ENCODE measurements at regions of chr17 and their contacts with region 1.

Region 1: DNA sequence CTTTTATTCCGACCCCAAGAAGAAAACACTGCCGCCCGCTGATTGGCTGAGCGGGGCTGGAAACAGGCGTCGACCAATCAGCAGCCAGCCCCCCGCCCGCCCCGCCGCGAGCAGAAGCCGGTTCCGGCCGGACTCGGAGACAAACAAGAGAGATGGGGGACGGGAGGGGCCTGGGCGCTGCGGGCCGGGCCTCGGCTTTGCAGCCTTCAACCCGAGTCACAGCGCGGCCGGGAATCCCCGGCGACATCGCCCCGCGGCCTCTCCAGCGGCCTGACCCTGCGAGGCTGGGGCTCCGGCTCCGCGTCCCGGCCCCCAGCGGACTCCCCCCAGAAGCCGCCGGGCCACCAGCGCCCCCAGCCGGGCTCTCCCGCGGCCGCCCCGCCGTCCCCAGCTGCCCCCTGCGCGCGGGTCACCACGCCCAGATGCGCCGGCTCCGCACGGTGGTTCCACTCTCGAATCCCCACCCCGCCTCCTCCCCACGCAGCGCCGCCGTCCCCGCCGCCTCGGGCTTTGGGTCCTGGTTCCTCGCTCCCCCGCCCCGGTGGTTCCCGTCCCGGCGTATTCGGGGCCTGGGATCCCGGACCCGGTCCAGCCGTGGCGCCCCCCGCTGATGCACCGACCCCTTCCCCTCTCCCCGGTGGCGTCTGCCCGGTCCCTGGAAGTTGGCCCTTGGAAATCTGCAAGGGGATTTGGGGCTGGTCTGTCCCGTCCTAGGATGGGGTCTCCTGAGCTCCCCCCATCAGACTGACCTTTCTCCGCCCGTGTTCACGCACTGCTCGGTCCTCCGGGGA is 417 bp upstream of the SLC43A2 start:
- DNase-seq: peak; percentile 96
- CTCF ChIP-seq: peak; percentile 19

Region 2: GRCh38 chr17:1573916-1574696 is 54.9 kb before region 1 on chr17:
- CTCF ChIA-PET with region 1: interaction called, 109 read pairs
- POLR2A ChIA-PET with region 1: interaction called, 7 read pairs
- DNase-seq: peak; percentile 93
- CTCF ChIP-seq: peak; percentile 84

Region 3: GRCh38 chr17:1606352-1607033 is 22.6 kb before region 1 on chr17:
- CTCF ChIA-PET with region 1: interaction called, 22 read pairs
- POLR2A ChIA-PET with region 1: interaction called, 9 read pairs
- DNase-seq: peak; percentile 30
- CTCF ChIP-seq: no peak

Region 4: GRCh38 chr17:1639549-1640343 is 10.7 kb after region 1 on chr17:
- CTCF ChIA-PET with region 1: interaction called, 59 read pairs
- POLR2A ChIA-PET with region 1: interaction called, 5 read pairs
- DNase-seq: no peak
- CTCF ChIP-seq: no peak

Measured in GM10248 (cell line).